CD4-positive, alpha-beta T cell (primary cell): ENCODE measurements at regions of chr10 and their contacts with region 1.

Region 1: GRCh38 chr10:71314028-71314693 is 4.9 kb upstream of the SLC29A3 start:
- DNase-seq: peak; percentile 33 to 84 (median 48)
- ATAC-seq: peak; percentile 50
- H3K4me3 ChIP-seq: no peak overlapping the region
- H3K4me3 Mint-ChIP-seq: no peak overlapping the region
- H3K27ac ChIP-seq: no peak overlapping the region
- H3K27ac Mint-ChIP-seq: no peak overlapping the region
- H3K4me1 ChIP-seq: peaks cover 14% of the 10 kb centered on the region
- H3K4me1 Mint-ChIP-seq: peaks cover 15% of the 10 kb centered on the region
- H3K27me3 ChIP-seq: peaks cover 0 to 2% of the 10 kb centered on the region in 2 experiments
- H3K27me3 Mint-ChIP-seq: peaks cover 11% of the 10 kb centered on the region
- CTCF ChIP-seq: peak; percentile 83

Region 2: DNA sequence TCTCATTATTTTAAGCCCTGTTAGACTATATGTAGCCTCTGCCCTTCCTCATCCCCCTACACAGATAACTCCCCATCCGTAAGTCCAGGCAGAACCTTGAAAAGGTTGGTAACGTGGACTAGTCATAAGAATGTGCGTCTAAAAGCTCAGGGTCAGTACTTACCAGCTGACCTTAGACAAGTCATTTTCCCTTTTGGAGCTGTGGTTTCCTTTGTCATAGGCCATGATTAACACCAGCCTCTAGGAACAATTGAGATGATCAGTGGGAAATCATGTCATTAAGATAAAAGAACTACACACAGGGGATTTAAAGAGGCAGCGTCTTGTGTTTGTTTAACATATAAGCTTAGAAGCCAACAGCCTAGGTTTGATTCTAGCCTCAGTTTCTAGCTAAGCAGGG is 108.7 kb before region 1 on chr10:
- CTCF ChIA-PET with region 1: no interaction called
- POLR2A ChIA-PET with region 1: no interaction called
- intact Hi-C with region 1: no loop called
- DNase-seq: no peak
- ATAC-seq: no peak
- H3K4me3 ChIP-seq: no peak overlapping the region
- H3K4me3 Mint-ChIP-seq: no peak overlapping the region
- H3K27ac ChIP-seq: no peak overlapping the region
- H3K27ac Mint-ChIP-seq: no peak overlapping the region
- H3K4me1 ChIP-seq: peaks cover 6% of the 10 kb centered on the region
- H3K4me1 Mint-ChIP-seq: no peaks in the 10 kb centered on the region
- H3K27me3 ChIP-seq: peaks cover 24 to 36% of the 10 kb centered on the region in 2 experiments
- H3K27me3 Mint-ChIP-seq: peaks cover 64% of the 10 kb centered on the region
- CTCF ChIP-seq: no peak

Region 3: GRCh38 chr10:71383972-71384687 is 70.0 kb after region 1 on chr10:
- CTCF ChIA-PET with region 1: interaction called, 3 read pairs
- POLR2A ChIA-PET with region 1: no interaction called
- intact Hi-C with region 1: loop called (anchors 2 to 10 kb)
- DNase-seq: peak; percentile 52 to 84 (median 67)
- ATAC-seq: peak; percentile 96
- H3K4me3 ChIP-seq: no peak overlapping the region
- H3K4me3 Mint-ChIP-seq: no peak overlapping the region
- H3K27ac ChIP-seq: no peak overlapping the region
- H3K27ac Mint-ChIP-seq: no peak overlapping the region
- H3K4me1 ChIP-seq: peaks cover 5% of the 10 kb centered on the region
- H3K4me1 Mint-ChIP-seq: no peaks in the 10 kb centered on the region
- H3K27me3 ChIP-seq: no peaks in the 10 kb centered on the region
- H3K27me3 Mint-ChIP-seq: no peaks in the 10 kb centered on the region
- CTCF ChIP-seq: peak; percentile 90

Region 4: GRCh38 chr10:71569775-71570588 is 255.8 kb after region 1 on chr10:
- CTCF ChIA-PET with region 1: interaction called, 17 read pairs
- POLR2A ChIA-PET with region 1: no interaction called
- intact Hi-C with region 1: loop called (anchors 1 kb)
- DNase-seq: peak; percentile 52 to 86 (median 75)
- ATAC-seq: no peak
- H3K4me3 ChIP-seq: no peak overlapping the region
- H3K4me3 Mint-ChIP-seq: no peak overlapping the region
- H3K27ac ChIP-seq: no peak overlapping the region
- H3K27ac Mint-ChIP-seq: no peak overlapping the region
- H3K4me1 ChIP-seq: no peaks in the 10 kb centered on the region
- H3K4me1 Mint-ChIP-seq: no peaks in the 10 kb centered on the region
- H3K27me3 ChIP-seq: no peaks in the 10 kb centered on the region
- H3K27me3 Mint-ChIP-seq: no peaks in the 10 kb centered on the region
- CTCF ChIP-seq: peak; percentile 87

Region 5: GRCh38 chr10:71696628-71697326 is 382.6 kb after region 1 on chr10:
- CTCF ChIA-PET with region 1: interaction called, 4 read pairs
- POLR2A ChIA-PET with region 1: no interaction called
- intact Hi-C with region 1: loop called in 1 of 2 experiments (anchors 1 kb)
- DNase-seq: peak; percentile 54 to 84 (median 66)
- ATAC-seq: peak; percentile 83
- H3K4me3 ChIP-seq: no peak overlapping the region
- H3K4me3 Mint-ChIP-seq: no peak overlapping the region
- H3K27ac ChIP-seq: no peak overlapping the region
- H3K27ac Mint-ChIP-seq: peak overlapping the region; percentile 33
- H3K4me1 ChIP-seq: peaks cover 65% of the 10 kb centered on the region
- H3K4me1 Mint-ChIP-seq: peaks cover 29% of the 10 kb centered on the region
- H3K27me3 ChIP-seq: no peaks in the 10 kb centered on the region
- H3K27me3 Mint-ChIP-seq: no peaks in the 10 kb centered on the region
- CTCF ChIP-seq: peak; percentile 70

Region 6: DNA sequence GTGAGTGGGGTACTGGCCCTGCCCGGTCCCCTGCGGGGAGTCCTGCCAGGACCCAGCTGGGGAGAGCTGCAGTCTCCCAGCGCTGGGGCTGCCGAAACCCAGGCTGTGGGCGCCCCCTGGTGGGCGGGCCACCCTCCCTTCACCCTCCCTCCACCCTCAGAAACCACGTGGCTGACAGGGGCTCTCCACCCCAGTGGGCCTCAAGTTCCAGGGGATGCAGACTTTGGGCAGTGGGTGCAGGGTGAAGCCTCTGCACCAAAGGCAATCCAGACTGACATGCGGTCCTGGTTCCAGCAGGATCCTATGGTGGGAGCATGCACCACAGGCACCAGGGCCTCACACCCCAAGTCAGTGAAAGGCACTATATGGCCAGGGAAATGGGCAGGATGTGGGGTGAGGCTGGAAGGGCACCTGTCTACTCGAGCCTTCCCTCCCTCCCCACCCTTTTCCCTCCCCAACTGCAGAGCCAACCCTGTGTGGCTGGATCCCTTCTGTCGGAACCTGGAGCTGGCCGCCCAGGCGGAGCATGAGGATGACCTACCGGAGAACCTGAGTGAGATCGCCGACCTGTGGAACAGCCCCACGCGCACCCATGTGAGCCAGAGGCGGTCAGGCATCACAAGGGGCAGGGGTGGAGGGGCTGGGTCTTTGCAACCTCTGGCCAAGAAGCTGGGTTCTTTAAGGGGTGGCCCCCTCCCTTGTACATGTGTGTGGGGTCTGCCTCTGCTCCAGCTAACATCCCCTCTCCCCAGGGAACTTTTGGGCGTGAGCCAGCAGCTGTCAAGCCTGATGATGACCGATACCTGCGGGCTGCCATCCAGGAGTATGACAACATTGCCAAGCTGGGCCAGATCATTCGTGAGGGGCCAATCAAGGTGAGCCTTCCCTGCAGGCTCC is 498.1 kb after region 1 on chr10:
- CTCF ChIA-PET with region 1: interaction called, 3 read pairs
- POLR2A ChIA-PET with region 1: interaction called, 6 read pairs
- intact Hi-C with region 1: loop called (anchors 1 kb)
- DNase-seq: peak; percentile 64 to 89 (median 76)
- ATAC-seq: peak; percentile 91
- H3K4me3 ChIP-seq: no peak overlapping the region
- H3K4me3 Mint-ChIP-seq: no peak overlapping the region
- H3K27ac ChIP-seq: no peak overlapping the region
- H3K27ac Mint-ChIP-seq: no peak overlapping the region
- H3K4me1 ChIP-seq: peaks cover 8% of the 10 kb centered on the region
- H3K4me1 Mint-ChIP-seq: no peaks in the 10 kb centered on the region
- H3K27me3 ChIP-seq: no peaks in the 10 kb centered on the region
- H3K27me3 Mint-ChIP-seq: no peaks in the 10 kb centered on the region
- CTCF ChIP-seq: peak; percentile 81

Region 7: GRCh38 chr10:71893920-71894319 is 579.8 kb after region 1 on chr10:
- CTCF ChIA-PET with region 1: interaction called, 7 read pairs
- POLR2A ChIA-PET with region 1: no interaction called
- intact Hi-C with region 1: loop called (anchors 1 to 5 kb)
- DNase-seq: no peak
- ATAC-seq: no peak
- H3K4me3 ChIP-seq: no peak overlapping the region
- H3K4me3 Mint-ChIP-seq: no peak overlapping the region
- H3K27ac ChIP-seq: no peak overlapping the region
- H3K27ac Mint-ChIP-seq: no peak overlapping the region
- H3K4me1 ChIP-seq: peaks cover 14% of the 10 kb centered on the region
- H3K4me1 Mint-ChIP-seq: peaks cover 21% of the 10 kb centered on the region
- H3K27me3 ChIP-seq: no peaks in the 10 kb centered on the region
- H3K27me3 Mint-ChIP-seq: no peaks in the 10 kb centered on the region
- CTCF ChIP-seq: no peak

Region 8: GRCh38 chr10:71899665-71900412 is 585.7 kb after region 1 on chr10:
- CTCF ChIA-PET with region 1: interaction called, 7 read pairs
- POLR2A ChIA-PET with region 1: no interaction called
- intact Hi-C with region 1: loop called (anchors 1 to 5 kb)
- DNase-seq: no peak
- ATAC-seq: no peak
- H3K4me3 ChIP-seq: no peak overlapping the region
- H3K4me3 Mint-ChIP-seq: no peak overlapping the region
- H3K27ac ChIP-seq: no peak overlapping the region
- H3K27ac Mint-ChIP-seq: no peak overlapping the region
- H3K4me1 ChIP-seq: peaks cover 6% of the 10 kb centered on the region
- H3K4me1 Mint-ChIP-seq: peaks cover 15% of the 10 kb centered on the region
- H3K27me3 ChIP-seq: no peaks in the 10 kb centered on the region
- H3K27me3 Mint-ChIP-seq: no peaks in the 10 kb centered on the region
- CTCF ChIP-seq: no peak